Activated CD4-positive, alpha-beta memory T cell treated with anti-CD3 and anti-CD28 coated beads for 36 hours (primary cell): ENCODE measurements at regions of chr7 and their contacts with region 1.

Region 1: GRCh38 chr7:7182156-7183060 is at the start of gene C1GALT1:
- DNase-seq: peak; percentile 98
- H3K4me3 Mint-ChIP-seq: peak within 1 kb of the TSS; percentile 87
- H3K27ac Mint-ChIP-seq: peak within 1 kb of the TSS; percentile 97
- H3K4me1 Mint-ChIP-seq: peaks cover 22% of the 10 kb centered on the region
- H3K27me3 Mint-ChIP-seq: no peaks in the 10 kb centered on the region
- total RNA-seq, gene C1GALT1: 34.1 to 36.7 TPM

Region 2: DNA sequence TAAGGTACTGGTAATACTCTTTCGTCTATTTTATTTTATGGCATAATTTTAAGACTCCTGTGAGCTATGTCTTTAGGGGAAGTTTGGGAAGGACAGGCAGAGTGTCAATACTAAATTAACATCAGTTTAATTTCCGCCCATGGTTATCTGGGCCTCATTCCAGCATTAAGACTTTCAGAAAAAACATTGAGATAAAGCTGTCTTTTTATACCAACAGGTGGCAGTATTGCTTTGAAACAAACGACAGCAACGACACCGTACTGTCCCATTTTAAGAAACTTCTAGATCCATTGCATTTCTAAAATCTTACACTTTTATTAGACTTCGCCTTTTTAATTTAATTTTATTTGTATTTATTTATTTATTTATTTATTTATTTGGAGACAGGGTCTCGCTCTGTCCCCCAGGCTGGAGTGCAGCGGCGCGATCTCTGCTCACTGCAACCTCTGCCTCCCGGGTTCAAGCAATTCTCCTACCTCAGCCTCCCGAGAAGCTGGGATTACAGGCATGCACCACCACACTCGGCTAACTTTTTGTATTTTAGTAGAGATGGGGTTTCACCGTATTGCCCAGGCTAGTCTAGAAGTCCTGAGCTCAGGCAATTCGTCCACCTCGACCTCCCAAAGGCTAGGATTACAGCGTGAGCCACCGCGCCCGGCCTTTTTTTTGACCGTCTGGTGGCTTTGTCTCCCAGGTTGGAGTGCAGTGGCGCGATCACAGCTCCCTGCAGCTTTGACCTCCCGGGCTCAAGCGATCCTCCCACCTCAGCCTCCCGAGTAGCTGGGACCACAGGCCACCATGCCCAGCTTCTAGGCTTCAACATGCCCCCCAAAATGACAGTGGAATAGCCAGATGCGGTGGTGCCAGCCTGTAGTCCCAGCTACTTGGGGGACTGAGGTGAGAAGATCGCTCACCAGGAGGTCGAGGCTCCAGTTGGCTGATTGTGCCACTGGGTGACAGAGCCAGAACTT is 78.8 kb before region 1 on chr7:
- CTCF ChIA-PET with region 1: interaction called, 7 read pairs
- POLR2A ChIA-PET with region 1: interaction called, 3 read pairs
- intact Hi-C with region 1: loop called (anchors 2 kb)
- DNase-seq: no peak
- H3K4me3 Mint-ChIP-seq: no peak overlapping the region
- H3K27ac Mint-ChIP-seq: no peak overlapping the region
- H3K4me1 Mint-ChIP-seq: peaks cover 18% of the 10 kb centered on the region
- H3K27me3 Mint-ChIP-seq: no peaks in the 10 kb centered on the region

Region 3: DNA sequence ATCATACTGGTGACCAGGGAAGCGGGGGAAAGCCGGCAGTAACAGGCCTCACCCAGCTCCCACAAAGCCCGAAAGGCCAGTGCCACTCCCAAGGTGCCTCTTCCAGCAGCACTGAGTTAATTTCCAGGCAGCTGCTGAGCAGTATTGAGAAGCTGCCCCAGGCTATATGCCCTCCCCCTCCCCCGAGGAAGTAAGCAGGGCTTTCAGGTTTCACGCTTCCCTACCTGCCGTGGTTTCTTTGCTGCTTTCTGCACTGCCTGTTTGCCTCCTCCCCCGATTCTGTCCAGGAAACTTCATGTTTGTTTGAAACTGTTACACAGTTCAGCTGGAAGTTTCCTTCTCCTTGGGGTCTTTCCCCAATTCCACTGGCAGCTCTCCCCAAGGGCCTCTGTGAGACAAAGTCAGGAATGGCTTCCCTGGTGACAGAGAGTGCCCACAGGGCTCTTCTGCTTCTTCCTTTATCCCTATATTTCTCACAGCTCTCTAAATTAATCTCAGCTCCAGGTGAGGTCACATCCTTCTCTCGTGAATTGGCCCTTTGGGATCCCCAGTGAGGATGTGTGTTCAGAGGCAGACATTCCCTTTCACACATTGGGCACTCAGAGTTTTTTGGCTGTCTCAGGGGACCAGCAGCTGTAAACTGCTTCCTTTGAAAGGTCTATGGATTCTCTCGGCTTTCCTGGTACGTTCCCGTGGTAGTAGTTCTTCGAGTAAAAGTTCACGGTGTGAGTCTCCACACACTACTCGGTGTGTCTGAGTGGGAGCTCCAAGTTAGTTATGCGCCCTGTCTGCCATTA is 19.4 kb after region 1 on chr7:
- CTCF ChIA-PET with region 1: interaction called, 8 read pairs
- POLR2A ChIA-PET with region 1: interaction called, 8 read pairs
- intact Hi-C with region 1: loop called (anchors 1 kb)
- DNase-seq: peak; percentile 58
- H3K4me3 Mint-ChIP-seq: peak overlapping the region; percentile 42
- H3K27ac Mint-ChIP-seq: peak overlapping the region; percentile 57
- H3K4me1 Mint-ChIP-seq: peaks cover 74% of the 10 kb centered on the region
- H3K27me3 Mint-ChIP-seq: no peaks in the 10 kb centered on the region

Region 4: DNA sequence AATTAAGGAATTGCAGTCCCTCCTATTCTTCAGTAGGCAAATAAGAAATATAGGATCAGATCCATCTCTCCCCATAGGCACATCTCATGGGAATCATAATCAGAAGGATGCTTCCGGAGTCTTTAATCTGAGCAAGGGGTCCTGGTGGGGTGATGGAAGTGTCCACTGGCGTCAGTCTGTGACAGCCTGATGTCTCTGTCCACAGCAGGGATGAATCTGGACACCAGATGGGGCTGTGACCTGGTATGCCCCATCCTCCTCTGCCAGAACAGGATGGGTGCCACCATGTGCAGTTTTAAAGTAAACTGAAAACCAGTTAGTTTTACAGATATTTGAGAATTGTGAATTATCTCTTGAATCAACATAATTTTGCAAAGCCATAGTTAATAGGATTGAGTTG is 148.6 kb after region 1 on chr7:
- CTCF ChIA-PET with region 1: no interaction called
- POLR2A ChIA-PET with region 1: no interaction called
- intact Hi-C with region 1: loop called (anchors 5 kb)
- DNase-seq: no peak
- H3K4me3 Mint-ChIP-seq: no peak overlapping the region
- H3K27ac Mint-ChIP-seq: no peak overlapping the region
- H3K4me1 Mint-ChIP-seq: peaks cover 12% of the 10 kb centered on the region
- H3K27me3 Mint-ChIP-seq: peaks cover 6% of the 10 kb centered on the region

Region 5: DNA sequence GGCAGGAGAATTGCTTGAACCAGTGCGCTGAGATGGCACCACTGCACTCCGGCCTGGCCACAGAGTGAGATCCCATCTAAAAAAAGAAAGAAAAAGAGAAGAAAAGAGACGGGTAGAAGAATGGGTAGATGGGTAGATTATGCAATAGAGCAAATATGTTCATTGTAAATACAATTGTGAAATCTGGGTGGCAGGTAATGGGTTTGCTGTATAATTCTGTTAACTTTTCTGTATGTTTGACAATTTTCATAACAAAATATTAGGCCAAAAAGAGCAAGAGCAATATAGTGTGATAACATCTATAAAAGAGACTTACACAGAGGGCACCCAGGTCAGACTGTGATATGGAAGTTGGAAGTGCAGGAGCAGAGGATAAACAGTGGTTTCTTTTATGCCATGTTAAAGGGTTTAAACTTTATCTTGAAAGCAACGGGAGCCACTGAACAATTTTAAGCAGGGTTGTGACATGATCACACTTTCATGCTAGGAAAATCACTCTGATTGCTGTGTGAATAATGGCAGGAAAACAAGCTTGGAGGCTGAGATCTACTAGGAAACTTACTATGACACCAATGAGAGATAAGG is 359.9 kb after region 1 on chr7:
- CTCF ChIA-PET with region 1: no interaction called
- POLR2A ChIA-PET with region 1: no interaction called
- intact Hi-C with region 1: loop called (anchors 5 kb)
- DNase-seq: no peak
- H3K4me3 Mint-ChIP-seq: no peak overlapping the region
- H3K27ac Mint-ChIP-seq: no peak overlapping the region
- H3K4me1 Mint-ChIP-seq: no peaks in the 10 kb centered on the region
- H3K27me3 Mint-ChIP-seq: no peaks in the 10 kb centered on the region

Region 6: GRCh38 chr7:7640221-7641128 is 458.1 kb after region 1 on chr7 and contains the start of gene UMAD1:
- CTCF ChIA-PET with region 1: no interaction called
- POLR2A ChIA-PET with region 1: interaction called, 15 read pairs
- intact Hi-C with region 1: loop called (anchors 1 kb)
- DNase-seq: peak; percentile 99
- H3K4me3 Mint-ChIP-seq: peak within 1 kb of the TSS; percentile 97
- H3K27ac Mint-ChIP-seq: peak within 1 kb of the TSS; percentile 100
- H3K4me1 Mint-ChIP-seq: peaks cover 45% of the 10 kb centered on the region
- H3K27me3 Mint-ChIP-seq: peaks cover 1% of the 10 kb centered on the region
- total RNA-seq, gene UMAD1: 15.0 to 17.6 TPM

Region 7: GRCh38 chr7:8125680-8126444 is 943.5 kb after region 1 on chr7:
- CTCF ChIA-PET with region 1: no interaction called
- POLR2A ChIA-PET with region 1: no interaction called
- intact Hi-C with region 1: loop called (anchors 1 kb)
- DNase-seq: peak; percentile 89
- H3K4me3 Mint-ChIP-seq: peak overlapping the region; percentile 66
- H3K27ac Mint-ChIP-seq: peak overlapping the region; percentile 92
- H3K4me1 Mint-ChIP-seq: peaks cover 78% of the 10 kb centered on the region
- H3K27me3 Mint-ChIP-seq: no peaks in the 10 kb centered on the region